ENCODE measurements at regions of chr1 and their contacts with region 1.

Region 1: DNA sequence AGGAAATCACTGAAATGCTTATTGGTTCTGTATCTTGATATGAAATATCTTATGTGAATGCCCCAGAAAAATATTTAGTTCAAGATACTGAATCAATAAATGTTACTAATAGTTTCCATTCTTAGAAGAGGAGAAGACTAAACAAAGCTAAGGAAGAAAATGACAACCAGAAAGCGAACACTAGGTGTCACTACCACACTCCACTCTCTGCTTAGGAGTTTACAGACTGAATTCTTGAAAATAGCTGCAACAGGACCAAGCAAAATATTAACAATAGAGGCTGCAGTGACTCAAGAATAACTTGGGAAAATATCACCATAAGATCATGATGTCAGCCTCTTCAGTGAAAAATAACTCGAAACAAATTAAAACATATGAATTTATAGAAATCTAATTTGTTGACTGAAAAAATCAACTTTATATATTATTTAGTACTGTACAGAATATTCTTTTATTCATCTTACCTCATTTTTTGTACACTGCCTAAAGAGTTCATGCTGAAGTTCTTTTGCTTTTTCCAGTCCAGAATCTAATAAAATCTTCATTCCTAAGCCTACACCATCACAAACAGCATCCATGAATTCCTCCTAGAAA is 61.6 kb downstream of the KIF14 start:
- DNase-seq: no peak
- ATAC-seq: peak in 1 of 4 donors; percentile 46
- H3K4me3 ChIP-seq: no peak overlapping the region
- H3K27ac ChIP-seq: no peak overlapping the region
- H3K4me1 ChIP-seq: no peaks in the 10 kb centered on the region
- H3K27me3 ChIP-seq: no peaks in the 10 kb centered on the region
- CTCF ChIP-seq: peak; percentile 35 to 69 (median 53)
- POLR2A ChIP-seq: no peak

Region 2: DNA sequence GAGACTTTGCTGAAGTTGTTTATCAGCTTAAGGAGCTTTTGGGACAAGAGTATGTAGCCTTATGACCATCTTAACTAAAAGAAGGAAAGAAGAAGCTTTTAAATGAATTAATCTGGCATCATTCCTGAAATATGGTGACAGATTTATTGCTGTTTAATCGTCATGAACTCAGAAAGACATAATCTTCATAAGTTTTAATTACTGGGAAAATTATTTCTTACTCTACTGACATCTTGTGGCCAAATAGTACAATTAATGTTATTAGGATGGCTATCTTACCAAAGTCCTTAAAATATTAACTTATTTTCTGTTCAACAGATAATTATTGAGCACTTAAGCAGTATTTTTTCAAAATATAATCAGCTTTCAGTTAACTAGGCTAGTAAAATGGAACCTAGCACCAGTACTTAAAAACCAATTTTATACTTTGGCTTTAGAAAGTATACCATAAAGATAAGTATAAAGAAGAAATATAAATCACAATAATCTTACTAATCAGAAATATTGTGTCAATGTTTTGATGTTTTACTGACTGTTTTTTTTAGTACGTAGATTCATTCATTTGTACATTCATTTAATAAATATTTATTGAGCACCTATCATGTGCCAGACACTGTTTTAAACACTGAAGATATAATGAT is 279.1 kb after region 1 on chr1:
- intact Hi-C with region 1: loop called in 3 of 10 experiments (anchors 5 to 10 kb)
- DNase-seq: no peak
- ATAC-seq: no peak
- H3K4me3 ChIP-seq: no peak overlapping the region
- H3K27ac ChIP-seq: no peak overlapping the region
- H3K4me1 ChIP-seq: no peaks in the 10 kb centered on the region
- H3K27me3 ChIP-seq: no peaks in the 10 kb centered on the region
- CTCF ChIP-seq: peak; percentile 27 to 69 (median 48)
- POLR2A ChIP-seq: no peak

Region 3: GRCh38 chr1:201096035-201096434 is 537.1 kb after region 1 on chr1:
- intact Hi-C with region 1: loop called in 1 of 10 experiments (anchors 5 kb)
- DNase-seq: no peak
- ATAC-seq: no peak
- H3K4me3 ChIP-seq: no peak overlapping the region
- H3K27ac ChIP-seq: no peak overlapping the region
- H3K4me1 ChIP-seq: no peaks in the 10 kb centered on the region
- H3K27me3 ChIP-seq: no peaks in the 10 kb centered on the region
- CTCF ChIP-seq: no peak
- POLR2A ChIP-seq: no peak

Measured in heart left ventricle (tissue), 16 donors.